GM23248 (cell line): ENCODE measurements at regions of chr2 and their contacts with region 1.

Region 1: GRCh38 chr2:165193178-165193777 is 10.6 kb downstream of the SCN3A start:
- DNase-seq: no peak
- H3K4me3 ChIP-seq: no peak overlapping the region
- H3K27ac ChIP-seq: no peak overlapping the region
- H3K4me1 ChIP-seq: no peaks in the 10 kb centered on the region
- H3K27me3 ChIP-seq: no peaks in the 10 kb centered on the region

Region 2: GRCh38 chr2:165015052-165015642 is 178.1 kb before region 1 on chr2:
- in situ Hi-C with region 1: loop called (anchors 25 kb)
- DNase-seq: peak; percentile 74
- H3K4me3 ChIP-seq: no peak overlapping the region
- H3K27ac ChIP-seq: no peak overlapping the region
- H3K4me1 ChIP-seq: no peaks in the 10 kb centered on the region
- H3K27me3 ChIP-seq: peaks cover 5% of the 10 kb centered on the region; the same call in 1 of the 2 replicates

Region 3: GRCh38 chr2:165601928-165602521 is 408.7 kb after region 1 on chr2:
- in situ Hi-C with region 1: no loop called
- DNase-seq: peak; percentile 84
- H3K4me3 ChIP-seq: no peak overlapping the region
- H3K27ac ChIP-seq: no peak overlapping the region
- H3K4me1 ChIP-seq: peaks cover 11% of the 10 kb centered on the region; the same call in 1 of the 2 replicates
- H3K27me3 ChIP-seq: no peaks in the 10 kb centered on the region